Endothelial cell of umbilical vein (primary cell): ENCODE measurements at regions of chr7 and their contacts with region 1.

Region 1: GRCh38 chr7:117119192-117119924 is 166.1 kb downstream of the ST7 start:
- DNase-seq: peak; percentile 84
- H3K4me3 ChIP-seq: peak overlapping the region in 1 of 3 experiments; percentile 28
- H3K27ac ChIP-seq: no peak overlapping the region
- H3K4me1 ChIP-seq: peaks cover 16% of the 10 kb centered on the region
- H3K27me3 ChIP-seq: no peaks in the 10 kb centered on the region
- CTCF ChIP-seq: peak; percentile 74 to 79
- POLR2A ChIP-seq: no peak

Region 2: GRCh38 chr7:116859323-116859722 is 260.0 kb before region 1 on chr7:
- CTCF ChIA-PET with region 1: no interaction called
- POLR2A ChIA-PET with region 1: no interaction called
- dilution Hi-C with region 1: no loop called
- intact Hi-C with region 1: no loop called
- DNase-seq: peak; percentile 48
- H3K4me3 ChIP-seq: no peak overlapping the region
- H3K27ac ChIP-seq: no peak overlapping the region
- H3K4me1 ChIP-seq: peaks cover 3% of the 10 kb centered on the region
- H3K27me3 ChIP-seq: no peaks in the 10 kb centered on the region
- CTCF ChIP-seq: no peak
- POLR2A ChIP-seq: no peak

Region 3: DNA sequence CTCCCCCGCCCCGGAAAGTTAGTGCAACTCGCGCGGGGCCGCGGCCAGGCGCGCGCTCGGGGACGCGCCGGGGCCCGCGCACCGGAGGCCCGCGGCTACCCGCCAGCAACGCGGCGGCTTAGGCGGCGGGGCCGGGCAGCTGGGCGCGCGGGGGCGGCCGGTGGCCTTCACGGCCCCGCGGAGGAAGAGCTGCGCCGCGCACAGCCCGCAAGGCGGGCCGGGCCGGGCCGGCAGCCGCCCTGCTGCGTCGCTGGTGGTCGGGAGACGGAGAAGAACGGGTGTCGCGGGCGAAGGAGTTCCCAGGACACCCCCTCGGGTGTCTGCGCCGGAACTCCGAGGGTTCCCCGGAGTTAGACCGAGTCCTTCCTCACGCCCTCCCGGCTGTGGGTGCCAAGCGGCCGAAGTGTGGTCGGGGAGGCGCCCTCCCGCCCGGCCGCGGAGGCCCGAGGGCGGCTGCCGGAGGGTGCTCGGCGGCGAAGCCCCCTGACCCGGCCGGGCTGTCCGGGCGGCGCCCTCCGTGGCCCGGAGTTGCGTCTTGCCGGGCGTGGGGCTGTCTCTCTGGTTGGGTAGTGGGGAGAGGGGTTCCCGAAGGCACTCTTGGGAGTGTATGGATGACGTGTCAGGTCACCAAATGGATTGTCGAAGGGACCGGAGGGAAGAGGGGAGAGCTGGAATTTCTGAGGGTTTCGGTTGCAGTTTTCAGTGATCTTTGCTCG is 165.5 kb before region 1 on chr7:
- CTCF ChIA-PET with region 1: interaction called, 13 read pairs
- POLR2A ChIA-PET with region 1: no interaction called
- dilution Hi-C with region 1: no loop called
- intact Hi-C with region 1: no loop called
- DNase-seq: peak; percentile 80
- H3K4me3 ChIP-seq: peak overlapping the region; percentile 88 to 92 (median 89)
- H3K27ac ChIP-seq: peak overlapping the region; percentile 95
- H3K4me1 ChIP-seq: peaks cover 24% of the 10 kb centered on the region
- H3K27me3 ChIP-seq: no peaks in the 10 kb centered on the region
- CTCF ChIP-seq: no peak
- POLR2A ChIP-seq: peak; percentile 48

Region 4: GRCh38 chr7:117014673-117015133 is 104.7 kb before region 1 on chr7:
- CTCF ChIA-PET with region 1: interaction called, 15 read pairs
- POLR2A ChIA-PET with region 1: no interaction called
- dilution Hi-C with region 1: no loop called
- intact Hi-C with region 1: no loop called
- DNase-seq: peak; percentile 59
- H3K4me3 ChIP-seq: no peak overlapping the region
- H3K27ac ChIP-seq: no peak overlapping the region
- H3K4me1 ChIP-seq: peaks cover 8% of the 10 kb centered on the region
- H3K27me3 ChIP-seq: no peaks in the 10 kb centered on the region
- CTCF ChIP-seq: no peak
- POLR2A ChIP-seq: no peak

Region 5: GRCh38 chr7:117072620-117073118 is 46.7 kb before region 1 on chr7:
- CTCF ChIA-PET with region 1: interaction called, 7 read pairs
- POLR2A ChIA-PET with region 1: no interaction called
- dilution Hi-C with region 1: no loop called
- intact Hi-C with region 1: loop called (anchors 2 kb)
- DNase-seq: peak; percentile 89
- H3K4me3 ChIP-seq: peak overlapping the region in 1 of 3 experiments; percentile 16
- H3K27ac ChIP-seq: peak overlapping the region; percentile 34
- H3K4me1 ChIP-seq: peaks cover 18% of the 10 kb centered on the region
- H3K27me3 ChIP-seq: no peaks in the 10 kb centered on the region
- CTCF ChIP-seq: no peak
- POLR2A ChIP-seq: no peak